ENCODE measurements at regions of chr1 and their contacts with region 1.

Region 1: DNA sequence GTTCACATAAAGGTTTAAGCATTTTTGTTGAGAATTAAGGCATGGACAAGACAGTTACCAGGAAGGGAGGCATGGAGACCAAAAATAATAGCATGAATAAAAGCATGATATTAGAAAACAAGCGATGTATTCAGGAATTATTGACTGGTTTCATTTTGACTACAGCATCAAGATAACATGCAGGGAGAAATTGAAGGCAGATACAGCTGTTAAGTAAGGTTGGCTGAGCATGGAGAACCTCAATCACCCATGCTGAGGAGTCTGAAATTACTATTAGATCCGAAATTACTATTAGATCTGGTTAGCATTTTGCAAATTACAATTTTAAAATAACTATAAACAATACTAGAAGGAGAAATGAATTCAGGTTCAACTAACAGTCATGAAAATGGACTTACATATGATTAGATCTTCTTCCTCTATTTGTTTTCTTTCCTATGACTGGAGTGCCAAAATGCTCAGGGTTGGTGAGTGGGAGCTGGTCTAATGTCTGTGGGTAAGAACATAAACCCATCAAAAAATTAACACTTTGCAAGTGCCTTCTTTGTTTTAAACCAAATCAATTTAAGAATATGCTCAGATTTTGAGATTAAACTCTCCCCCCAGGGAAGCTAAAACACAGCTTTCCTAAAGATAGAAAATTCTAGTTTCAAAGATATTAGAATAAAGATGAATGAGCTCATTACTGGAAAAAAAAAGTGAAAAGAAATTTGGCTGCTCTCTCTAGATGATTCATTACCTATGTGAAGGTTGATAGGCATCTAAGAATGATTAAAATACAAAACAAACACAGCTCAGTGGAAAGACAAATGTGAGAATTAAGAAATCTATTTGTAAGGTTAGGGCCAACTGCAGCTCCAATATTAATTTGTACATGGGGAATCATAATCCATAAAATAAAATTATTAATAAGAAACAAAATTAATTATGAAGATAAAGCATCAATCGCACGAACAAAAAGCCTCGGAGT is 81.7 kb downstream of the ARID4B start:
- DNase-seq: no peak
- H3K4me3 Mint-ChIP-seq: peak overlapping the region; percentile 62
- H3K27ac Mint-ChIP-seq: peak overlapping the region; percentile 80
- H3K4me1 Mint-ChIP-seq: peaks cover 50% of the 10 kb centered on the region
- H3K27me3 Mint-ChIP-seq: no peaks in the 10 kb centered on the region

Region 2: DNA sequence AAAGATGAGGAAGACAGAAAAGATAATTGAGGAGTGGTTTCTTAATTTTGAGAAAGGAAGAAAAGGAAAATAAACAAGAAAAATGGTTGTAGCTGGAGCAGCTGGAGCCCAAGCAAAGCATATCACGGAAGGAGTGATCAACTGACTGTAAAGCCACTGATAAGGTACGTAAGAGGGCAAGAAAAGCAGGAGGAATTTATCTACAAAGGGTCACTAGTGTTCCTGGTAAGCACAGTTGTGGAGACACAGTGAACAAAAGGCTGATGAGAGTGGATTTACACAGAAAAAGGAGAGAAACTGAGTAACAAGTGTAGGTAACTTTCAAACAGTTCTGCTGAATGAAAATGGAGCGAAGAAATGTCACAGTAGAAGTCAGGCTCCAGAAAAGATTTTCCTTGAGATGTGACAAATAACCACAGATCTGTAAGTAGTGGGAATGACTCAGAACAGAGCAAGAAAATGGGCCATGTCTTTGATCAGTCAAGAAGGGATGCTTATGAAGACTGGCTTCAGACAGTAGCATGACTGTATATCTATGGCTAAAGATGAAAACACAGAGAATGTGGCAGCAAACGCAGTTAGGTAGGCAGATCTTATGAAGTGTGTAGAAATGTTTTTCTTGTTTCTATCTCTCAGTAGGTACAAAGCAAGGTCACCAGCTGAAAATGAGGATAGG is 39.6 kb before region 1 on chr1:
- intact Hi-C with region 1: loop called (anchors 2 kb)
- DNase-seq: no peak
- H3K4me3 Mint-ChIP-seq: peak overlapping the region; percentile 26
- H3K27ac Mint-ChIP-seq: peak overlapping the region; percentile 92
- H3K4me1 Mint-ChIP-seq: peaks cover 28% of the 10 kb centered on the region
- H3K27me3 Mint-ChIP-seq: no peaks in the 10 kb centered on the region

Region 3: DNA sequence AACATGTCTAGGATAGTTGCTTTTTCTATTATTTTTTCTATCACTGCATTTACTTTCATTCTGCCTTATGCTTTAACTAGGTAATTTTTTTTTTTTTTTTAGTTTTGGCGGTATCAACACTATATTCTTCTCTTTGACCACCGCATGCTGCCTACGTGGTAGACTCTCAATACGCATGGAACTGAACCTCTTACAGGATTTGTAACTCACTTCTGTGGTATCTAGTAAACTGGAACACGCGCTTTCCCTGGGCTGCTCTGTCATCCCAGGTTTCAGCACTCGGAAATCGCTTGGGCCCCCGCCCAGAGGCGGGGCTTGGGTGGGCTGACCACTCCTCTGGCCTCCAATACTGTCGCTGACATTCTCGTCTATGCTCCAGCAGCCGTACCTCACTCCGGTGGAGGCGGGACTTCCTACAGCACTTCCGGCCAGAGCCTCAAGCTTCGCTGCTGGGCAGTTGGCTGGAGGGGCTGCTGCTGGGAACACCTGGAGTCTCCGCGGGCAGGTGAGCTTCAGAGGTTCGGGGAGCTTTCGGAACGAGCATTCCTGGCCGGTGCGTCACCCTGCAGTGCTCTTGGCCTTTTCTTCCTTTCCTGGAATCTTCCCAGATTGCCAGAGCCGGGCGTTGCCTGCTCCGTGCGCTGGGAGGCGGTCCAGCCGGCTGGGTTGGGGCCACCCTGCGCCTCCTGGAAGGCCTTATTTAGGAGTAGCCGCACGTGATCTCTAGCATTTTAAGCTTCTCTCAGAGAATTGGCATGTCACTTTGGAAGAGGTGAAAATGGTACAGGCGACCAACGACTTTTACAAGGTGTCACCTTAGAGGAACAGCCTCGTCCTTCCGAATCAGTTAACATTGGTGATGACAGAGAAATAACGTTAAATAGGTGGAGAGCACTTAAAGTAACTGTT is 120.9 kb after region 1 on chr1 and contains the start of gene TBCE:
- intact Hi-C with region 1: loop called (anchors 1 kb)
- DNase-seq: peak; percentile 85
- H3K4me3 Mint-ChIP-seq: peak within 1 kb of the TSS; percentile 97
- H3K27ac Mint-ChIP-seq: peak within 1 kb of the TSS; percentile 82
- H3K4me1 Mint-ChIP-seq: peaks cover 26% of the 10 kb centered on the region
- H3K27me3 Mint-ChIP-seq: no peaks in the 10 kb centered on the region
- total RNA-seq, gene TBCE: 25.0 and 28.2 TPM in 2 replicates

Region 4: DNA sequence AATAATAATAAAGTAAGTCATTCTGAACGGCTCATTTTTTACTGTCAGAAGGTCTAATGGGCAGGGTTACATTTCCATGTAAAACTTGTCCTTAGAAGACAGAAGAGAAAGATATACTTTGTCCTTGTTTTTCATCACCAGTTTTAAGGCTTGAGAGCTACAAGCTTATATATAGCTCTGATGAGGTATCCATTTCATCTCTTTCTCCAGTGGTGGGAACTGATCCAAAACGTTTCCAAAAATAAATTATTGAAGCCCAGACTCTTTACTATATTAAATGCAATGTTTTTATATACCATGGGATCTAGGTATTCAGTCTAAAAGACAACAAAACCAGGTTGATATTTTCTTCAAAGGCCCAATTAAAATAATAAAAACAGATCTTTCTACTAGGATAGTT is 249.2 kb after region 1 on chr1:
- intact Hi-C with region 1: loop called (anchors 2 kb)
- DNase-seq: no peak
- H3K4me3 Mint-ChIP-seq: no peak overlapping the region
- H3K27ac Mint-ChIP-seq: no peak overlapping the region
- H3K4me1 Mint-ChIP-seq: peaks cover 22% of the 10 kb centered on the region
- H3K27me3 Mint-ChIP-seq: no peaks in the 10 kb centered on the region

Measured in activated T-helper 2 cell treated with anti-CD3 and anti-CD28 coated beads, Interferon-gamma antibody, Interleukin-2, Interleukin-4, amounts not matched to agents 10 μg/mL and 5 μg/mL and 100 μg/mL, durations not matched to agents 14 hours and 24 hours and 36 hours (primary cell).